ENCODE measurements at regions of chr14 and their contacts with region 1.

Region 1: GRCh38 chr14:83289896-83290295 is 1756.2 kb upstream of the SEL1L start:
- DNase-seq: no peak
- ATAC-seq: no peak
- H3K4me3 ChIP-seq: no peak overlapping the region
- H3K27ac ChIP-seq: no peak overlapping the region
- H3K4me1 ChIP-seq: no peaks in the 10 kb centered on the region
- H3K27me3 ChIP-seq: no peaks in the 10 kb centered on the region
- CTCF ChIP-seq: no peak

Region 2: GRCh38 chr14:83184531-83184930 is 105.4 kb before region 1 on chr14:
- intact Hi-C with region 1: loop called in 1 of 10 experiments (anchors 5 kb)
- DNase-seq: no peak
- ATAC-seq: no peak
- H3K4me3 ChIP-seq: no peak overlapping the region
- H3K27ac ChIP-seq: no peak overlapping the region
- H3K4me1 ChIP-seq: no peaks in the 10 kb centered on the region
- H3K27me3 ChIP-seq: no peaks in the 10 kb centered on the region
- CTCF ChIP-seq: no peak